Lower leg skin (tissue), 4 donors: ENCODE measurements at regions of chr2 and their contacts with region 1.

Region 1: DNA sequence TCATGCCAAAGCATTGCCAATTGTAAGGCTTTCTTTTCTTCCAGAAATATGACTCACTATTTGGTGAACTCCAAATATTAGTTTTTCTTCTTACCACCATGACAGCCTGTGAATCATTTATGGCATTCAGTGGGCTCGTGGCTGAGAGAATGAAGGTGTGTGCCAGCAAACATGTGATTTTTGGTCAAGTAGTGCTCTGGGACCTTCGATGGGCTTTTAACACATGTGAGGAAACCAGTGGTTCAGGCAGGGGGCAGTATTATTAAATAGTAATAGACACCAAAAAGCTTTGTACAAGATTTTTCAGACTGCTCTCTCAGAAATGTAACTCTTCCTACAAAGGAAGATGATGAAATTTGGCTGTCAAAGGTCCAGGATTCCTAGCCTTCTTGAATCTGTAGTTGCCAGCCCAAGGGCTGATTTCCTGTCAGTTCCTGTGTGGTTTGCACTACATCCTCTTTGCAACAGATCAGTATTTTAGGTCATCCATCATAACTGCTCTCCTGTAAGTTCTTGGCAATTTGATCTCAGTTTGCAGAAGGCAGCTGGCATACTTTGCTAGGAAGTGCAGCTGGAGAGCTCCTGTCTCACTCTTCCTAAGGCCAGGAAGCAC is 64.3 kb downstream of the BABAM2 start:
- DNase-seq: peak; percentile 78 to 93
- H3K4me3 ChIP-seq: no peak overlapping the region
- CTCF ChIP-seq: no peak
- POLR2A ChIP-seq: no peak

Region 2: GRCh38 chr2:29097569-29097968 is 1142.7 kb after region 1 on chr2:
- intact Hi-C with region 1: loop called (anchors 5 kb)
- DNase-seq: no peak
- H3K4me3 ChIP-seq: no peak overlapping the region
- CTCF ChIP-seq: no peak
- POLR2A ChIP-seq: no peak